Activated CD8-positive, alpha-beta T cell treated with anti-CD3 and anti-CD28 coated beads for 36 hours (primary cell): ENCODE measurements at regions of chr4 and their contacts with region 1.

Region 1: DNA sequence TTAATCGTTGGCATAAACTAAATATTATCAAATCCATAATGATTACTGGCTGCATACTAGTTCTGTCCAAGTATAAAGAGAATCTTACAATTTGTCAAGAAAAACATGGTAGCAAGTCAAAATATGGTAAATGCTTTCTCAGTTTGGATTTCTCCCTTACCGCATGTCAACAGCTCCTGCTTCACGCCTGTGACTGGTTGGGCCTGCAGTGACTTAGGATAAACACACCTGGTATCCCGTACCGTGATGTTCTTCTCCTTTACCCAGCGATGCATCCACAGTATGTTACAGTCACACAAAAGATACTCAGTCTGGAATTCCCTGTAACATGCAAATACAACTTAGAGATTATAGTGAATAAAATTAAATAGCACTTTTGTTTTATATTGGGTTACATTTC is 71.1 kb downstream of the ADGRA3 start:
- DNase-seq: no peak
- ATAC-seq: peak; percentile 49
- H3K4me3 Mint-ChIP-seq: peak overlapping the region; percentile 73
- H3K27ac Mint-ChIP-seq: peak overlapping the region; percentile 98
- H3K4me1 Mint-ChIP-seq: peaks cover 37% of the 10 kb centered on the region
- H3K27me3 Mint-ChIP-seq: no peaks in the 10 kb centered on the region
- CTCF ChIP-seq: no peak

Region 2: GRCh38 chr4:22463179-22463578 is 18.4 kb after region 1 on chr4:
- CTCF ChIA-PET with region 1: interaction called, 11 read pairs
- POLR2A ChIA-PET with region 1: interaction called, 3 read pairs
- intact Hi-C with region 1: no loop called
- DNase-seq: peak; percentile 65
- ATAC-seq: peak; percentile 47
- H3K4me3 Mint-ChIP-seq: no peak overlapping the region
- H3K27ac Mint-ChIP-seq: no peak overlapping the region
- H3K4me1 Mint-ChIP-seq: peaks cover 6% of the 10 kb centered on the region
- H3K27me3 Mint-ChIP-seq: no peaks in the 10 kb centered on the region
- CTCF ChIP-seq: peak; percentile 22

Region 3: GRCh38 chr4:22634541-22635181 is 189.8 kb after region 1 on chr4:
- CTCF ChIA-PET with region 1: no interaction called
- POLR2A ChIA-PET with region 1: no interaction called
- intact Hi-C with region 1: no loop called
- DNase-seq: no peak
- ATAC-seq: no peak
- H3K4me3 Mint-ChIP-seq: no peak overlapping the region
- H3K27ac Mint-ChIP-seq: no peak overlapping the region
- H3K4me1 Mint-ChIP-seq: no peaks in the 10 kb centered on the region
- H3K27me3 Mint-ChIP-seq: no peaks in the 10 kb centered on the region
- CTCF ChIP-seq: no peak